ENCODE measurements at regions of chr14 and their contacts with region 1.

Region 1: GRCh38 chr14:64478634-64479250 is 13.4 kb downstream of the AKAP5 start:
- DNase-seq: no peak
- H3K4me3 ChIP-seq: no peak overlapping the region
- H3K27ac ChIP-seq: no peak overlapping the region
- H3K4me1 ChIP-seq: peaks cover 0 to 4% (median 0%) of the 10 kb centered on the region in 6 donors
- H3K27me3 ChIP-seq: no peaks in the 10 kb centered on the region
- CTCF ChIP-seq: peak in 9 of 11 experiments; percentile 8 to 58 (median 46)
- POLR2A ChIP-seq: no peak

Region 2: DNA sequence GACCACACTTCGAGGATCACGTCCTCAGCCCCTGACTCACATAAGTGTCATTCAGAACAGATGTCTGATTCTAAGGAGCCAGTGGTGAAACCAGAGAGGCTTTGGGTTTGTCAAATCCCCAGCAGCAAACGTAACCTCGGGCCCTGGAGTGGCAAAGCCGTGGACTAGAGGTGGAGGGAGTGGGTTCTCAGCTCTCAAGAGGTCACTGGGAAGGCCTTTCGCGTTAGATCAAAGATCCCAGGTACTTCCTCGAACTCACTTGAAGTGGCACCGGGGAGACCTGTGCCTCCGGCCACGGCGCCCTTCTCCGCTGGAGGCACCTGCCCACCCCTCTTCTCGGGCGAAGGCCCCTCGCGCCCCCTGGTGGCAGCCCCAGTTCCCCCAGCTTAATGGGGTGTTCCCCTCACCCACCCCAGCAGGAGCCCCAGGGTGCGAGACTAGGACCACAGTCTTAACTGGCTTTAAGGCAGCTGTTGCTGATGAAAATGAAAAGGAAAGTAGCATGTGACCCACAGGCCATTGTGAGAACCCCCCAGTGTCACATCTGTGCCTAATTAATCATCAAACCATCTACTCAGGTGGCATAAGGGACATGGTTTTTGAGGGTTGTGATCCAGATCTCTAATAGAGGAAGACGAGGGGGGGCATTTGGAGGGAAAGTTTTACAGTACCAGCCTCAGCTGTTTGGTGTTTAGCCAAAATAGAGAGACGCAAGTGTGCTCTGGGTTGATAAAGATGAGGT is 183.9 kb before region 1 on chr14:
- intact Hi-C with region 1: no loop called
- DNase-seq: peak; percentile 96
- H3K4me3 ChIP-seq: peak overlapping the region; percentile 42 to 76 (median 50)
- H3K27ac ChIP-seq: peak overlapping the region in 7 of 8 donors; percentile 11 to 70 (median 47)
- H3K4me1 ChIP-seq: peaks cover 3 to 36% (median 21%) of the 10 kb centered on the region in 6 donors
- H3K27me3 ChIP-seq: peaks cover 0 to 30% (median 8%) of the 10 kb centered on the region in 7 donors
- CTCF ChIP-seq: peak; percentile 70 to 92 (median 82)
- POLR2A ChIP-seq: no peak

Region 3: GRCh38 chr14:64340560-64341196 is 138.1 kb before region 1 on chr14:
- intact Hi-C with region 1: loop called (anchors 10 kb)
- DNase-seq: no peak
- H3K4me3 ChIP-seq: no peak overlapping the region
- H3K27ac ChIP-seq: no peak overlapping the region
- H3K4me1 ChIP-seq: peaks cover 10 to 24% (median 18%) of the 10 kb centered on the region in 6 donors
- H3K27me3 ChIP-seq: no peaks in the 10 kb centered on the region
- CTCF ChIP-seq: no peak
- POLR2A ChIP-seq: no peak

Region 4: DNA sequence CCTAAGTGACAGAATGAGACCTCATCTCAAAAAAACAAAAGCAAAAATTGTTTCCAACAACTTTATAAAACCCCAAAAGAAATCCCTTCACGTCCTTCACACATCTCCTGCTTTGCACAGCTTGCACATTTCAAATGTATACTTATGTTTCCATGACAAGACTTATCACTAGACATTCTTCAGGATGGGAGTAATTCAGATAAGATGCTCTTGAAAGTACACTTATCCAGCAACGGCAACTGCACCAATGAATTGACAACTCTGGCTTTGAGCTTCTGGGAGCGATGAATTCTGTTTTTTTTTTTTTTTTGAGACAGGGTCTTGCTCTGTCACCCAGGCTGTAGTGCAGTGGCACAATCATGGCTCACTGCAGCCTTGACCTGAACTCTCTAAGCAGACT is 44.2 kb before region 1 on chr14:
- intact Hi-C with region 1: loop called (anchors 5 kb)
- DNase-seq: no peak
- H3K4me3 ChIP-seq: no peak overlapping the region
- H3K27ac ChIP-seq: no peak overlapping the region
- H3K4me1 ChIP-seq: no peaks in the 10 kb centered on the region
- H3K27me3 ChIP-seq: no peaks in the 10 kb centered on the region
- CTCF ChIP-seq: no peak
- POLR2A ChIP-seq: no peak

Region 5: GRCh38 chr14:64522591-64523355 is 44.0 kb after region 1 on chr14:
- intact Hi-C with region 1: no loop called
- DNase-seq: no peak
- H3K4me3 ChIP-seq: no peak overlapping the region
- H3K27ac ChIP-seq: no peak overlapping the region
- H3K4me1 ChIP-seq: peaks cover 0 to 31% (median 5%) of the 10 kb centered on the region in 6 donors
- H3K27me3 ChIP-seq: no peaks in the 10 kb centered on the region
- CTCF ChIP-seq: no peak
- POLR2A ChIP-seq: no peak

Region 6: DNA sequence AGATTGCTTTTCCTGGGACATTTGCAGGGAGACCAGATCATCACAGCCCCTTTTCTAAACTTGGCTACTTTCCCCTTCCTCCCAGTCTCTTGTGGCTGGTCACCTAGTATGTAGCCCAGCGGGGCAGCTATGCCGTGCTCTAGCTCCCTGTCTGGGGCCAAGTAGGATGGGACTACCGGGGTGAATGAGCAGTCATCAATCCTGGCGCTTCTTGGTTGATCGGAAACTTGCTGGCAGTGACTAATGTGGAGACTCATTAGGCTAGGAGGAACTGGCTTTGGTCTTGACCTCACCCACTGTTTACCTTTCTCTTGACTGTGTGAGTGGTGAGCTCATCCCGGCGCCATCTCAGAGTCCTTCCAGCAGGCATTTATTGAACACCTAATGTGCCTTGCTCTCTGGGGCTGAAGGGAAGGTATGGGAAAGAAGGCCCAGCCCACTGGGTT is 241.4 kb after region 1 on chr14:
- intact Hi-C with region 1: no loop called
- DNase-seq: no peak
- H3K4me3 ChIP-seq: no peak overlapping the region
- H3K27ac ChIP-seq: peak overlapping the region in 6 of 8 donors; percentile 13 to 85 (median 66)
- H3K4me1 ChIP-seq: peaks cover 26 to 98% (median 86%) of the 10 kb centered on the region in 6 donors
- H3K27me3 ChIP-seq: no peaks in the 10 kb centered on the region
- CTCF ChIP-seq: no peak
- POLR2A ChIP-seq: no peak